HEK293T (cell line): ENCODE measurements at regions of chr5 and their contacts with region 1.

Region 1: GRCh38 chr5:112419986-112420864 is 1.1 kb upstream of the EPB41L4A start:
- DNase-seq: peak; percentile 84

Region 2: GRCh38 chr5:112160652-112161391 is 259.4 kb before region 1 on chr5:
- CTCF ChIA-PET with region 1: interaction called, 7 read pairs
- POLR2A ChIA-PET with region 1: interaction called, 24 read pairs
- DNase-seq: peak; percentile 91

Region 3: DNA sequence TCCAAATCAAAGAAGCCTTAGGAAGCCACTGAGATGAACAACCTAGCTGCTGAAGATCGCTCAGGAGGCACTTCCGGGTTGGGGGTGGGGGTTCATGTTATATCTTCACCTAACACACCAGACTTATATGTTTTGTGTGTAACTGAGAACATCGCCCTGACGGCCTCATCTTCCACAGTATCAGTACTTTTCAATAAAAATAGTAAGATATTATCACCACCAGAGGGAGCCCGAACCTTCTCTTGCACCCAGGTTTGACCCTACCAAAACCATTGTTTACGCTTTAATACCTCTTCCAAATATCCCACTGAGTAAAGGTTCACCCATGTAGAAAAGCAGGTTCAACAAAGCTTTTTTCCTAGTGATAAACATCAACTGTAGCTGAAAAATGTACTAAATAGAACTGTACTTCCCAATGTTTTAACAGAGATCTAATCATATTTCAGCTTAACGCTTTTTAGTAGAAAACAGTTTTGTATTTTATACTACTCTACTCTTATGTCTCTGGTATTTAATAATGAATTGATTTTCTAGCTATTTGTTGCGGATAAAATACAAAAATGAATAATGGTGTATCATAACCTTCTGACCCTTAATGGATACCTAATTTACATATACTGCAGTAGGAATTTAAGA is 245.1 kb before region 1 on chr5:
- CTCF ChIA-PET with region 1: interaction called, 23 read pairs
- POLR2A ChIA-PET with region 1: interaction called, 3 read pairs
- DNase-seq: peak; percentile 55

Region 4: GRCh38 chr5:112253478-112254250 is 166.6 kb before region 1 on chr5:
- CTCF ChIA-PET with region 1: no interaction called
- POLR2A ChIA-PET with region 1: no interaction called
- DNase-seq: no peak

Region 5: DNA sequence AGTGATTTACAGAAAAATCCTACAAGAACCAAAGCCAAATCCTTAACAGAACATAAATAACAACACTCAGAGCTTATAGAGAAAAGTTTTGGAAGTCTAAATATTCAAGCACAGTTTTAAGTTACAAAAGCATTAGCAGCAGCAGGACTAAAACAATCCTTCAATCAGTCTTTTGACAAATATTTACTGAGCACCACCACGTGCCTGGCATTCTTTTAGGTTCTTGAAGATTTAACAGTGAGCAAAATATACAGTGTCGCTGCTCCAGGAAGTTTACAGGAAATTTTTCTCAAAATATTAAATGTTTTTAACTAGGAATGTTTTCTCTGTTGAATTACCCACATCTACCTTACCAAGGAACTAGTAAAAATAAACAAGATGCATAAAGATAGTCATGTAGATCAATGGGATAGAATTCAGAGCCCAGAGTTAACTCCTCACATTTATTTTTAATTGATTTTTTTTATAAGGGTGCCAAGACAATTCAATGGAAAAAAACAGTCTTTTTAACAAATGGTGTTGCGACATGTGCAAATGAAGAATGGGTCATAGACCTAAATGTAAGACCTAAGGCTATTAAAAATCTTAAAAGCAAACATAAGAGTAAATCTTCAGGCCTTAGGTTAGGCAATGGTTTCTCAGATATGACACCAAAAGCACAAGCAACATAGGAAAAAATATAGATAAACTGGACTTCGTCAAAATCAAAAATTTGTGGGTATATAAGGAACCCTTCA is 12.4 kb before region 1 on chr5:
- CTCF ChIA-PET with region 1: interaction called, 11 read pairs
- POLR2A ChIA-PET with region 1: interaction called, 3 read pairs
- DNase-seq: no peak

Region 6: GRCh38 chr5:112511920-112512319 is 91.7 kb after region 1 on chr5:
- CTCF ChIA-PET with region 1: no interaction called
- POLR2A ChIA-PET with region 1: no interaction called
- DNase-seq: no peak

Region 7: GRCh38 chr5:112563169-112563826 is 143.1 kb after region 1 on chr5:
- CTCF ChIA-PET with region 1: no interaction called
- POLR2A ChIA-PET with region 1: no interaction called
- DNase-seq: no peak